PC-9 (cell line): ENCODE measurements at regions of chr6 and their contacts with region 1.

Region 1: DNA sequence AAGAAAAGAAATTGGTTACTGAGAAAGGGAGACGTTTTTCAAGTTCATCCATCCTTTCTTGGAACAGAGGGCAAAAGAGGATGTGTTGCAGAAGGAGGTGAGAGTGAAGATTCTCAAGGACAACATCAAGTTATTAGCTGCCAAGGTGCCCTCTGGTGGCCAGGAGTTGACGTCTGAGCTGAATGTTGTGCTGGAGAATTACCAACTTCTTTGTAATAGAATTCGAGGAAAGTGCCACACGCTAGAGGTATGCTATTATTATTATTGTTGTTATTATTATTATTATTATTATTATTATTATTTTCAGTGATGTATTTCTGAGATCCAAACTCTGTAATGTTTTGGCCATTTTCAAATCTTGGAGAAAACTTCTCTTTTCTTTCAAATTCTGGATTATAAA is 197.0 kb downstream of the UTRN start:
- DNase-seq: peak; percentile 60 to 69
- H3K4me3 ChIP-seq: no peak overlapping the region
- H3K27ac ChIP-seq: no peak overlapping the region
- H3K4me1 ChIP-seq: no peaks in the 10 kb centered on the region
- H3K27me3 ChIP-seq: no peaks in the 10 kb centered on the region
- CTCF ChIP-seq: peak; percentile 75

Region 2: DNA sequence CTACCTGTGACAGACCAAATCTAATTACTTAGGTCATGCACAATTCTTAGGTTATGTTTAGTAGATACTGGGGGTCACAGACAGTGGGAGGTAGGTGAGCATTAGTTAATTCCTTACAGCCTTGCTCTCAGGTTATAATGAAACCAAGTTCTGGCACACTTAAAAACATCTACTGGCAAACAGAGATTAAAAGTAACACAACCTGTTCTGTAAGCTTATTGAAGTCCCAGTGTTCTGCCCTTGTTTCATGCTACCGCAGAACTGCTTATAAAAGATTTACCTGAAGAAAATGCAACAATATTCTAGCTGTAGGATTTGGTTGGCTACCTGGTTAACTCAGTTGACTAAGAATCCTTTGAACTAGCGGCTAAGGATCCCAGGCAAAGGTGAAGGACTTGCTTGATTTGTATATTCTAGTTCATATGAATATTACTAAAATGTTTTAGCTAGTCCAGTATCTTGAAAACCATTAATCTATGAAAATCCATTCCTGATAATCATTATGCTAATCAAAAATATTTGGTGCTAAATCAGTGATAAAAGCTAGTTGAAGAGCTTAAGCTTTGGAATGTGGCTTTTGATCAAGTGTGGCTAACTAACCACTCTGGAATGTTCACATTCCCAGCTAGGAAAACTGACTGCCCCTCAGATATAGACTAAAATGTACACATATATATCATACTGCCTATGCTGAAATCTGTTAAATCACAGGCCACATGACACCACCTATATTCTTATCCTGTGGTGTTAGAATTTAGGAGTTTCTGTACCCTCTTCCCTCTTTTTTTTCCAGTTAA is 1024.4 kb before region 1 on chr6:
- CTCF ChIA-PET with region 1: no interaction called
- POLR2A ChIA-PET with region 1: interaction called, 10 read pairs
- intact Hi-C with region 1: no loop called
- DNase-seq: peak in 1 of 2 experiments; percentile 69
- H3K4me3 ChIP-seq: peak overlapping the region; percentile 3; the same call in 1 of the 2 replicates
- H3K27ac ChIP-seq: peak overlapping the region; percentile 28
- H3K4me1 ChIP-seq: peaks cover 19% of the 10 kb centered on the region
- H3K27me3 ChIP-seq: no peaks in the 10 kb centered on the region
- CTCF ChIP-seq: no peak

Region 3: GRCh38 chr6:144083172-144083571 is 399.0 kb before region 1 on chr6:
- CTCF ChIA-PET with region 1: interaction called, 13 read pairs
- POLR2A ChIA-PET with region 1: interaction called, 3 read pairs
- intact Hi-C with region 1: no loop called
- DNase-seq: no peak
- H3K4me3 ChIP-seq: no peak overlapping the region
- H3K27ac ChIP-seq: no peak overlapping the region
- H3K4me1 ChIP-seq: no peaks in the 10 kb centered on the region
- H3K27me3 ChIP-seq: no peaks in the 10 kb centered on the region
- CTCF ChIP-seq: no peak

Region 4: GRCh38 chr6:144104898-144105487 is 377.1 kb before region 1 on chr6:
- CTCF ChIA-PET with region 1: no interaction called
- POLR2A ChIA-PET with region 1: interaction called, 5 read pairs
- intact Hi-C with region 1: loop called (anchors 1 kb)
- DNase-seq: peak; percentile 19 to 50
- H3K4me3 ChIP-seq: no peak overlapping the region
- H3K27ac ChIP-seq: no peak overlapping the region
- H3K4me1 ChIP-seq: no peaks in the 10 kb centered on the region
- H3K27me3 ChIP-seq: no peaks in the 10 kb centered on the region
- CTCF ChIP-seq: peak; percentile 84

Region 5: DNA sequence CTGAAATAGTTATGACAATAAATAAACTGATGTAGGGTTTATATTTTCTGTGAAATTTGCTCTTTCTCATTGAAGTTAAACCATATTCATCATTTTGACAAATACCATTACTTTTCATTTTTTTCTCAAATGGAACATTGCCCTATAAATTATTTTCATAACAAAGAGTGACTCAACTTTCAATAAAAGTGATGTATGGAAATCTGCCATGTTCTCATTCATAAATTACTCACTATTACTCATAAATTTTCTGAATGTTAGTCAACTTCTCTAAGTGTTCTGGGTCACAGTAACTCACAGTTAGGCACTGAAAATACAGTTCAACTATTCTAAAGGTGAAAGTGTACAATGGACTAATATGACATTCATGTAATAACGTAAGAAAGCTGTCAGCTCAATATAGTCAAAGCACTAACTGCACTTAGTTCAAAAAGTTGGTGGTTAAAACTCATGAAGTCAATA is 350.9 kb before region 1 on chr6:
- CTCF ChIA-PET with region 1: no interaction called
- POLR2A ChIA-PET with region 1: interaction called, 11 read pairs
- intact Hi-C with region 1: no loop called
- DNase-seq: peak in 1 of 2 experiments; percentile 80
- H3K4me3 ChIP-seq: no peak overlapping the region
- H3K27ac ChIP-seq: peak overlapping the region; percentile 33; the same call in 1 of the 2 replicates
- H3K4me1 ChIP-seq: peaks cover 13% of the 10 kb centered on the region
- H3K27me3 ChIP-seq: no peaks in the 10 kb centered on the region
- CTCF ChIP-seq: no peak

Region 6: GRCh38 chr6:144278659-144279314 is 203.4 kb before region 1 on chr6:
- CTCF ChIA-PET with region 1: no interaction called
- POLR2A ChIA-PET with region 1: no interaction called
- intact Hi-C with region 1: no loop called
- DNase-seq: peak; percentile 65 to 81
- H3K4me3 ChIP-seq: no peak overlapping the region
- H3K27ac ChIP-seq: no peak overlapping the region
- H3K4me1 ChIP-seq: peaks cover 27% of the 10 kb centered on the region
- H3K27me3 ChIP-seq: no peaks in the 10 kb centered on the region
- CTCF ChIP-seq: no peak